B cell (primary cell): ENCODE measurements at regions of chr6 and their contacts with region 1.

Region 1: GRCh38 chr6:136792410-136793262 is at the start of gene MAP3K5:
- DNase-seq: peak; percentile 96
- ATAC-seq: peak; percentile 68
- H3K4me3 ChIP-seq: peak within 1 kb of the TSS; percentile 81 to 99 (median 96)
- H3K4me3 Mint-ChIP-seq: peak within 1 kb of the TSS; percentile 95
- H3K27ac ChIP-seq: peak within 1 kb of the TSS; percentile 95 to 98
- H3K27ac Mint-ChIP-seq: peak within 1 kb of the TSS; percentile 95
- H3K4me1 ChIP-seq: peaks cover 35 to 36% of the 10 kb centered on the region in 2 donors
- H3K4me1 Mint-ChIP-seq: peaks cover 39% of the 10 kb centered on the region
- H3K27me3 ChIP-seq: no peaks in the 10 kb centered on the region
- H3K27me3 Mint-ChIP-seq: no peaks in the 10 kb centered on the region
- CTCF ChIP-seq: peak; percentile 76
- total RNA-seq, gene MAP3K5: 34.1 and 35.1 TPM in 2 replicates

Region 2: GRCh38 chr6:136643850-136644596 is 148.6 kb before region 1 on chr6:
- CTCF ChIA-PET with region 1: interaction called, 433 read pairs
- POLR2A ChIA-PET with region 1: interaction called, 16 read pairs
- intact Hi-C with region 1: loop called (anchors 1 kb)
- DNase-seq: peak; percentile 83
- ATAC-seq: peak; percentile 83
- H3K4me3 ChIP-seq: no peak overlapping the region
- H3K4me3 Mint-ChIP-seq: no peak overlapping the region
- H3K27ac ChIP-seq: no peak overlapping the region
- H3K27ac Mint-ChIP-seq: peak overlapping the region; percentile 29
- H3K4me1 ChIP-seq: peaks cover 7 to 10% of the 10 kb centered on the region in 2 donors
- H3K4me1 Mint-ChIP-seq: peaks cover 8% of the 10 kb centered on the region
- H3K27me3 ChIP-seq: no peaks in the 10 kb centered on the region
- H3K27me3 Mint-ChIP-seq: no peaks in the 10 kb centered on the region
- CTCF ChIP-seq: peak; percentile 94

Region 3: DNA sequence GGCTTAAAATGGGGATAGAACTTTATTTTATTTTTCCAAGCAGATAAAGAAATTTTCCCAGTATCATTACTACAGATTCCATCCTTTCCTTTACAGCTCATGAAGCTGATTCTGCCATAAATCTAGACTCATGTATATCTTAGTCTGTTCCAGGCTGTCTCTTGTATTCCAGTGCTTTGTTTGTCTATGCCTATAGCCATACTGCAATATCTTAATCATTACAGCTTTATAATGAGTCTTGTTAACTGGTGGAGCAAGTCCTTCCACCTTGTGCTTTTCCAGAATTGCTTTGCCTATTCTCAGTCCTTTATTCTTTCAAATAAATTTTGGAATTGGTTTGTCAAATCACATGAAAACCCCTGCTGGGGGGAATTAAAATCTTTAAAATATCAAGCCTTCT is 99.5 kb before region 1 on chr6:
- CTCF ChIA-PET with region 1: interaction called, 10 read pairs
- POLR2A ChIA-PET with region 1: no interaction called
- intact Hi-C with region 1: no loop called
- DNase-seq: no peak
- ATAC-seq: no peak
- H3K4me3 ChIP-seq: no peak overlapping the region
- H3K4me3 Mint-ChIP-seq: no peak overlapping the region
- H3K27ac ChIP-seq: no peak overlapping the region
- H3K27ac Mint-ChIP-seq: no peak overlapping the region
- H3K4me1 ChIP-seq: no peaks in the 10 kb centered on the region
- H3K4me1 Mint-ChIP-seq: no peaks in the 10 kb centered on the region
- H3K27me3 ChIP-seq: no peaks in the 10 kb centered on the region
- H3K27me3 Mint-ChIP-seq: no peaks in the 10 kb centered on the region
- CTCF ChIP-seq: no peak

Region 4: DNA sequence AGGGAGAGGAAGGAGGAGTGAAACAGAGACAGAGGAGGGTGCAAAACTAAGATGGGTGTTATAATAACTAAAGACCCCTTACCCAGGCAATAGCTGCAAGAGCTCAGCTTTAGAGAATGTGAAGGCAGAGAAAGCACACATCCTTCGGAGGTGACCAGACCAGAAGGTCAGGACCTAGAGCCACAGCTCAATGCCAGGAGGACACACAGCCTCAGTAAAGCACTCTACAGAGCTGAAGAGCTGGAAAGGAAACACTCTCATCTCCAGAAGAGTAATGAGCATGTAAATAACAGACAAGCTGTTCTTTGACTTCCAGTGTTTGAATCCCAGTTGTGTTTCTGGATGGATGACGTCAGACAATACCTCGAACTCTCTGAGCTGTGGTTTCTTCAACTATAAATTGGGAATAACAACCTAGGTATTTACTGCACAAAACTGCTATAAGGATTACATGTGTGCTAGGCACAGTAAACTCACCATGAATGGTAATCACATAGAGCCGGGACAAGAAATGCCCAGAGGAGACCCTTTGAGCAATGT is 63.6 kb before region 1 on chr6:
- CTCF ChIA-PET with region 1: interaction called, 31 read pairs
- POLR2A ChIA-PET with region 1: interaction called, 8 read pairs
- intact Hi-C with region 1: loop called (anchors 2 kb)
- DNase-seq: no peak
- ATAC-seq: no peak
- H3K4me3 ChIP-seq: no peak overlapping the region
- H3K4me3 Mint-ChIP-seq: no peak overlapping the region
- H3K27ac ChIP-seq: no peak overlapping the region
- H3K27ac Mint-ChIP-seq: no peak overlapping the region
- H3K4me1 ChIP-seq: peaks cover 3 to 4% of the 10 kb centered on the region in 2 donors
- H3K4me1 Mint-ChIP-seq: peaks cover 50% of the 10 kb centered on the region
- H3K27me3 ChIP-seq: no peaks in the 10 kb centered on the region
- H3K27me3 Mint-ChIP-seq: no peaks in the 10 kb centered on the region
- CTCF ChIP-seq: no peak

Region 5: DNA sequence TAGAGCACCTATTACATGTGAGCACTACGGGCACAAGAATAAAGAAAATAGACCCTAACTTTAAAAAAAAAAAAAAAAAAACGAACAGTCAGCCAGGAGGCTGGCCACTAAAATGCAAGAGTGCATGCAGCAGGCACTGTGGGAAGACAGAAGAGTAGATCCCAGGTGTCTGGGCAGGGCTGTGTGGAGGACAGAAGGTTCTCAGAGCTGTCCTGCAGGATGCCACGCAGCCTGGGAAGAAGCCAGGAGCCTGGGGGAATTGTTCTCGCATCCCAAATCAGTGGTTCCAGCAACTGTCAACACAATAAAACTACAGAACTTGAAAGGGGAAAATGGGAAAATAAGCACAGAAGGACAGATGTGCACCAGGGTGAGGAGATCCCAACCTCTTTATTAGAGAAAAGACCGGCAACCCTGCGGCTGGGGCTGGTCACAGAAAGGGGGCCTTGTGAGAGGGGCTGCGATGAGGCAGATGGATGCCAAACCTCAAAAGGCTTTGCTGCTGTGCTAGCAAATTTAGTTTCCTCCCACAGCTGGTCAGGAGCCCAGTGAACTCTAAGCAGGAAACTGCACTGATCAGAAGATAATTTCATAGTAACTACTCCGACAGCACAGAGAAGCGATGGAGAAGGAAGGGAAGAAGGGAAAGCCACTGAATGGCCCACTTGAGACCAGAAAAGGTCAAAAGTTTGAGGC is 31.3 kb before region 1 on chr6:
- CTCF ChIA-PET with region 1: interaction called, 128 read pairs
- POLR2A ChIA-PET with region 1: interaction called, 21 read pairs
- intact Hi-C with region 1: loop called (anchors 2 kb)
- DNase-seq: peak; percentile 21
- ATAC-seq: peak; percentile 22
- H3K4me3 ChIP-seq: peak overlapping the region; percentile 3 to 53 (median 19)
- H3K4me3 Mint-ChIP-seq: peak overlapping the region; percentile 74
- H3K27ac ChIP-seq: peak overlapping the region; percentile 84 to 91
- H3K27ac Mint-ChIP-seq: peak overlapping the region; percentile 85
- H3K4me1 ChIP-seq: peaks cover 61% of the 10 kb centered on the region in 2 donors
- H3K4me1 Mint-ChIP-seq: peaks cover 67% of the 10 kb centered on the region
- H3K27me3 ChIP-seq: no peaks in the 10 kb centered on the region
- H3K27me3 Mint-ChIP-seq: no peaks in the 10 kb centered on the region
- CTCF ChIP-seq: no peak

Region 6: DNA sequence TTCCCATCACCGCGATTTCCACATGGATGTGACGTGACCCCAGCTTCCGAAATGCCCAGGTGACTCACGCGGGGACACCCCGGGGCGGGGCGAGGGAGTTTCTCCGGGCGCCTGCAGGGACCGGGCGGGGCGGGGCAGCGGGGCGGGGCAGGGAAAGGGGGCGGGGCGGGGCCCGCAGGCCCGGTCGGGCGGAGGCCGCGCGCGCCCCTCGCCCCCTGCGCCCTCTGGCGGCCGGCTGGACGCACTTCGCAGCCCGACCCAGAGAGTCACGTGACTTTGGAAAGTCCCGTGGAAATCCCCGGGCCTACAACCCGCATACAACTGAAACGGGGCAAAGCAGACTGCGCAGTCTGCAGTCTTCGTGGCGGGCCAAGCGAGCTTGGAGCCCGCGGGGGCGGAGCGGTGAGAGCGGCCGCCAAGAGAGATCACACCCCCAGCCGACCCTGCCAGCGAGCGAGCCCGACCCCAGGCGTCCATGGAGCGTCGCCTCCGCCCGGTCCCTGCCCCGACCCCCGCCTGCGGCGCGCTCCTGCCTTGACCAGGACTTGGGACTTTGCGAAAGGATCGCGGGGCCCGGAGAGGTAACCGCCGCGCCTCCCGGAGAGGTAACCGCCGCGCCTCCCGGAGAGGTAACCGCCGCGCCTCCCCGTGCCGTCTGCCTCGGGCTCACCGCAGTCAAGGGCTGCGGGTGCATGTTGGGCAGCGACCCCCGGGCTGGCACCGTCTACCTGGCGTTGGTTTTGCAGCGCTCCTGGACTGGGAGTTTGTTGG is 1074.5 kb after region 1 on chr6 and contains the start of gene TNFAIP3:
- CTCF ChIA-PET with region 1: no interaction called
- POLR2A ChIA-PET with region 1: no interaction called
- intact Hi-C with region 1: loop called (anchors 2 kb)
- DNase-seq: peak; percentile 99
- ATAC-seq: peak; percentile 80
- H3K4me3 ChIP-seq: peak within 1 kb of the TSS; percentile 95 to 99 (median 96)
- H3K4me3 Mint-ChIP-seq: peak within 1 kb of the TSS; percentile 94
- H3K27ac ChIP-seq: peak within 1 kb of the TSS; percentile 96 to 97
- H3K27ac Mint-ChIP-seq: peak within 1 kb of the TSS; percentile 99
- H3K4me1 ChIP-seq: peaks cover 40 to 43% of the 10 kb centered on the region in 2 donors
- H3K4me1 Mint-ChIP-seq: peaks cover 50% of the 10 kb centered on the region
- H3K27me3 ChIP-seq: no peaks in the 10 kb centered on the region
- H3K27me3 Mint-ChIP-seq: no peaks in the 10 kb centered on the region
- CTCF ChIP-seq: peak; percentile 73
- total RNA-seq, gene TNFAIP3: 92.0 and 92.2 TPM in 2 replicates